ENCODE measurements at regions of chr13 and their contacts with region 1.

Region 1: GRCh38 chr13:77599351-77599750 is 63.8 kb downstream of the SCEL start:
- DNase-seq: peak in 1 of 2 donors; percentile 12
- H3K4me3 ChIP-seq: no peak overlapping the region
- H3K27ac ChIP-seq: no peak overlapping the region
- H3K4me1 ChIP-seq: no peaks in the 10 kb centered on the region
- H3K27me3 ChIP-seq: no peaks in the 10 kb centered on the region
- CTCF ChIP-seq: no peak
- EP300 ChIP-seq: no peak
- POLR2A ChIP-seq: no peak

Region 2: GRCh38 chr13:77002590-77003190 is 596.7 kb before region 1 on chr13:
- intact Hi-C with region 1: no loop called
- DNase-seq: peak in 1 of 2 donors; percentile 51
- H3K4me3 ChIP-seq: no peak overlapping the region
- H3K27ac ChIP-seq: peak overlapping the region in 2 of 5 donors; percentile 0 to 45
- H3K4me1 ChIP-seq: peaks cover 0 to 71% (median 37%) of the 10 kb centered on the region in 4 donors
- H3K27me3 ChIP-seq: no peaks in the 10 kb centered on the region
- CTCF ChIP-seq: peak in 4 of 7 experiments; percentile 40 to 52 (median 47)
- EP300 ChIP-seq: no peak
- POLR2A ChIP-seq: no peak

Region 3: GRCh38 chr13:77751513-77752456 is 152.4 kb after region 1 on chr13:
- intact Hi-C with region 1: loop called (anchors 10 kb)
- DNase-seq: peak in 1 of 2 donors; percentile 83
- H3K4me3 ChIP-seq: no peak overlapping the region
- H3K27ac ChIP-seq: no peak overlapping the region
- H3K4me1 ChIP-seq: peaks cover 0 to 7% (median 3%) of the 10 kb centered on the region in 4 donors
- H3K27me3 ChIP-seq: no peaks in the 10 kb centered on the region
- CTCF ChIP-seq: peak in 5 of 7 experiments; percentile 61 to 87 (median 67)
- EP300 ChIP-seq: no peak
- POLR2A ChIP-seq: no peak